ENCODE measurements at regions of chr2 and their contacts with region 1.

Region 1: DNA sequence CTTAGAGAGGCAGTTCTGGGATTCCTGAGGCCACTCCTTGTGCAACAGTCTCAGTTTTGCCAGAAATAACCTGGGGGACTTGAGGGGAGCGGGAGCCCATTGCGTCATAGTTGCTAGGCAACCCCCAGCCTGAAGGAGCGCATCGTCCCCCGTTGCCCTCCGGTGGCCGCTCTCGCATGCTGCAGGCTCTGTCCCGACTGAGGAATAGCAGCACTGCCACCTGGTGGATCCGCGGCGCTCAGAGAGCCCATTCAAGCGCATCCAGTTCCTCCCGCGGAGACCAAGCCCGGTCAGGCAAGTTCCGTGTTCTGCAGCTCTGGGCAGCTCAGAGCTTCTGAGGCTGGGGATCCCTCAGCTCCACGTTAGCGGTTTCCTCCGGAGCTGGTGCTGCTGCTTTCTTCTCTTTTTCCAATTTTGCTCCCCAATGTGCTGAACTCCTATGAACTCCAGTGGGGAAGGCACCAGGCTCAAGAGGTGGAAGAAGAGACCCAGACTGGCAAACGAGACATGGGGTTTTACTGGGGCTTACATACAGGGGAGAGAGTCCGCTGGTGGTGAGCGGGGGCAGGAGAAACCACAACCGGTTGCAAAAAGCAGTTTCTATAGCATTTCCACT is 15.1 kb downstream of the SLC4A3 start:
- DNase-seq: peak; percentile 95
- ATAC-seq: peak; percentile 98
- H3K4me3 Mint-ChIP-seq: no peak overlapping the region
- H3K27ac Mint-ChIP-seq: no peak overlapping the region
- H3K4me1 Mint-ChIP-seq: peaks cover 16% of the 10 kb centered on the region
- H3K27me3 Mint-ChIP-seq: peaks cover 7% of the 10 kb centered on the region

Region 2: GRCh38 chr2:219597552-219598307 is 44.8 kb before region 1 on chr2 and contains the start of gene STK11IP:
- CTCF ChIA-PET with region 1: interaction called, 11 read pairs
- POLR2A ChIA-PET with region 1: no interaction called
- DNase-seq: peak; percentile 96
- ATAC-seq: peak; percentile 92
- H3K4me3 Mint-ChIP-seq: peak within 1 kb of the TSS; percentile 94
- H3K27ac Mint-ChIP-seq: peak within 1 kb of the TSS; percentile 89
- H3K4me1 Mint-ChIP-seq: peaks cover 32% of the 10 kb centered on the region
- H3K27me3 Mint-ChIP-seq: peaks cover 9% of the 10 kb centered on the region
- total RNA-seq, gene STK11IP: 30.0 to 33.1 TPM

Region 3: DNA sequence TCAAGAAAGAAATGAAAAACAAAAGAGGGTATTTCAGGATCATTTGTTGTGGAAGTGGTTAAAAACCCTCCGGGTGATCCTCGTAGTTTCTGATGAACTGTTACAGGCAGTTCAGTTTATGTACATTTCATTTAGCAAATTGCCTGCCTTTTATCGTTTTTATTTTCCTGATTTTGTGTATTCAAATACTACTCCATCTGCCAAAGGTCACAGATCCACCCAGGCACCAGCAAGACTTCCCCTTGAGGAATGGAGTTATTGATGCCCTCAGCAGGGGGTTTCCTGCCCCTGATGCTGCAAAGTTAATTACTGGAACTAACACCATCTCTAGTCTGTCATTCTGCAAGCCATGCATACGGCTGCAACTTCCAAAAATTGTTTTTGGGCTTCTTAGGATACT is 626.8 kb after region 1 on chr2:
- CTCF ChIA-PET with region 1: no interaction called
- POLR2A ChIA-PET with region 1: no interaction called
- DNase-seq: no peak
- ATAC-seq: no peak
- H3K4me3 Mint-ChIP-seq: no peak overlapping the region
- H3K27ac Mint-ChIP-seq: no peak overlapping the region
- H3K4me1 Mint-ChIP-seq: no peaks in the 10 kb centered on the region
- H3K27me3 Mint-ChIP-seq: no peaks in the 10 kb centered on the region